Kidney (tissue), 22 donors: ENCODE measurements at regions of chr14 and their contacts with region 1.

Region 1: DNA sequence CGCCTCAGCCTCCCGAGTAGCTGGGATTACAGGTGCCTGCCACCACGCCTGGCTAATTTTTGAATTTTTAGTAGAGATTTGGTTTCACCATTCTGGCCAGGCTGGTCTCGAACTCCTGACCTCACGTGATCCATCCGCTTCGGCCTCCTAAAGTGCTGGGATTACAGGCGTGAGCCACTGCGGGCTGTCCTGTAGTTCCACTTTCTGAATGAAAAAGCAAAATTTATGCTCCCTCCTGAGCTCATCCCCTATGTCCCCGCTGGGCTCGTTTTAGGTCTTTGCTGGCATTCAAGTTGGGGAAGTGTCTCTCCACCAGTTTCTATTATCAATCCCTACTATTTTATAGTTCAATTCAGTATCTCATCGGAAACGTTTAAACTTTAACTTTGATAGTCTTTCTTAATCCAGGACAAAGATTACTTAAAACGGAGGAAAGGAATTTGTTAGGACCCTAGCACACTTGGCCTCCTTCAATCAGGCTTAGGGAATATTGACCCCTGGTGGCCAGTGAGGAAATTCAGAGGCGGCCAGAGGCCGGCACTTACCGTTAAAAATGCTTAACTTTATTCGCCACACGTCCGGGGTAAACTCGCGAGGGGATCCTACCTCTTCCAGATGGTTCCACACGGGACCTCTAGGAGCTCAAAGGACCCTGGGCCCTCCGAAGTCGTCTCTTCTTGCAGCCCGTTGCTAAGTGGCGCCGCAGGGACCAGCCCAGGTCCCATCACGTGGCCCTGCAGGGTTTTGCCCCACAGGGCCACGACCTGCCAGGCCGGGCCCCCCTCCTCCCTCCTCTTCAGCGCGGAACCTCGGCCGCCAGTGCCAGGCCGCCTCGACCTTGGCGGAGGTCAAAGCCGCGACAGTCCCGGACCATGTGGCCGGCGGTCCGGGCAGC is 11.4 kb upstream of the DNAL1 start:
- DNase-seq: peak; percentile 72 to 90 (median 78)
- H3K4me3 ChIP-seq: peak overlapping the region; percentile 14 to 76 (median 62)
- H3K27ac ChIP-seq: peak overlapping the region; percentile 34 to 72
- H3K4me1 ChIP-seq: peaks cover 0 to 5% (median 0%) of the 10 kb centered on the region in 3 donors
- H3K27me3 ChIP-seq: no peaks in the 10 kb centered on the region
- CTCF ChIP-seq: peak; percentile 89

Region 2: DNA sequence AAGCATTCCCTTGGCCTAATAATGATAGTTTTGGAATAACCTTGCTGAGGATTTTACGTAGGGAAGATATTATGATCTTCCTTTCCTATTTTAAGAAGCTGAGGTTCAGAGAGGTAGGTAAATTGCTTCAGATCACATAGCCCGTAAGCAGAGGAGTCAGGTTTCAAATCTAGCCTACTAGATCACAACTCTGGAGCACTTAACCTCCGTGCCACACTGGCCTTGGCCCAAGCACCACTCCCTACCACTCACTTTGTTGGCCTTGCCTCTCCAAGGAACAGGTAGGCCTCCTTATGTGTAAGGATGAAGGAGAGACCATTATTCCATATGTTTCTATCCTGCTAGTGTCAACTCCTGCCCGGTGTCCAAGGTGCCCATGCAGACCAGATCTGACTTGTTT is 108.9 kb before region 1 on chr14:
- intact Hi-C with region 1: loop called (anchors 10 kb)
- DNase-seq: no peak
- H3K4me3 ChIP-seq: no peak overlapping the region
- H3K27ac ChIP-seq: no peak overlapping the region
- H3K4me1 ChIP-seq: peaks cover 0 to 3% (median 0%) of the 10 kb centered on the region in 3 donors
- H3K27me3 ChIP-seq: no peaks in the 10 kb centered on the region
- CTCF ChIP-seq: no peak